Aorta (tissue), 5 donors: ENCODE measurements at regions of chr13 and their contacts with region 1.

Region 1: GRCh38 chr13:20997430-20998161 is 63.8 kb downstream of the LATS2 start:
- DNase-seq: peak in 1 of 2 donors; percentile 71
- ATAC-seq: peak; percentile 30
- H3K4me3 ChIP-seq: no peak overlapping the region
- H3K27ac ChIP-seq: peak overlapping the region in 1 of 2 donors; percentile 71
- H3K4me1 ChIP-seq: no peaks in the 10 kb centered on the region
- H3K27me3 ChIP-seq: no peaks in the 10 kb centered on the region

Region 2: GRCh38 chr13:20803180-20803965 is 194.2 kb before region 1 on chr13:
- intact Hi-C with region 1: no loop called
- DNase-seq: no peak
- ATAC-seq: no peak
- H3K4me3 ChIP-seq: no peak overlapping the region
- H3K27ac ChIP-seq: no peak overlapping the region
- H3K4me1 ChIP-seq: peaks cover 0 to 2% of the 10 kb centered on the region in 2 donors
- H3K27me3 ChIP-seq: no peaks in the 10 kb centered on the region

Region 3: GRCh38 chr13:21060987-21061763 is 63.6 kb after region 1 on chr13 and contains the start of gene LATS2:
- intact Hi-C with region 1: loop called in 1 of 2 experiments (anchors 5 kb)
- DNase-seq: peak; percentile 97 to 99
- ATAC-seq: peak; percentile 97
- H3K4me3 ChIP-seq: peak within 1 kb of the TSS; percentile 95 to 98
- H3K27ac ChIP-seq: peak within 1 kb of the TSS; percentile 97 to 99
- H3K4me1 ChIP-seq: no peaks in the 10 kb centered on the region
- H3K27me3 ChIP-seq: no peaks in the 10 kb centered on the region
- total RNA-seq, gene LATS2: 52.9 to 64.6 TPM

Region 4: DNA sequence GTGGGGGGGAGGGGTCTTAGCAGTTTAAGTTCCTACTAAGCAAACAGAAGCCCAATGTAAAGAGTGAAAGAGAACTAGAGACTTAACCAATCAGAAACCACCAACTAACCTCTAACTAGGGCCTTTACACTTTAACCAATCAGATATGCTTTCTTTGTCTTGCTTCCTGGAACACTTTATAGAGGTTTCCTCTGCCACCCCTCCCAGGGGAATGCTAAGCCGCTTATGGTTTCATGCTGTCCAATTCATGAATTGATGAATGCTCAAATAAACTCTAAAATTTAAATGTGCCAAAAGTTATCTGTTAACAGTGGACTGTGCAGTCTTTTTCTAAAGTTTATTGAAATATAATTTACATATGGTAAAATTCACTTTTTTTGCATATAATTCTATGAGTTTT is 97.7 kb after region 1 on chr13:
- intact Hi-C with region 1: no loop called
- DNase-seq: no peak
- ATAC-seq: no peak
- H3K4me3 ChIP-seq: no peak overlapping the region
- H3K27ac ChIP-seq: no peak overlapping the region
- H3K4me1 ChIP-seq: no peaks in the 10 kb centered on the region
- H3K27me3 ChIP-seq: no peaks in the 10 kb centered on the region

Region 5: DNA sequence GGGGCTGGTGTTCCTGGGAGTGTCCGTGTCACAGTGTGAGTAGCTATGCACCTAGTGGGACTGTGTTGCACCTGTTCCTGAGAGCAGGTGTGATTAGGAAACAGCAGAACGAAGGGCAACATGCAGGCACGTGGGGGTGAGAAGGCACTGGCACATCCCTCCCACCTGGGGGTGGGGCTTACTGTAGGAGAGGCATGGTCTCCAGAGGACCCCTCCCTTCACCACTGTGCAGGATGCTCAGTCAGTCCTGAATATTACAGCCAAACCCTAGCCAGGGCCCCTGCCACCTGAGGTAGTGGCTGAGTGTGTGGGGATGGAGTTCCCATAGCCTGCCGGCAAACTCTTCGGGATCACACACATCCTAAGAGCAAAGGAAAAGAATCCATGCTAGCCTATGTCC is 362.3 kb after region 1 on chr13:
- intact Hi-C with region 1: no loop called
- DNase-seq: no peak
- ATAC-seq: no peak
- H3K4me3 ChIP-seq: no peak overlapping the region
- H3K27ac ChIP-seq: no peak overlapping the region
- H3K4me1 ChIP-seq: no peaks in the 10 kb centered on the region
- H3K27me3 ChIP-seq: no peaks in the 10 kb centered on the region

Region 6: DNA sequence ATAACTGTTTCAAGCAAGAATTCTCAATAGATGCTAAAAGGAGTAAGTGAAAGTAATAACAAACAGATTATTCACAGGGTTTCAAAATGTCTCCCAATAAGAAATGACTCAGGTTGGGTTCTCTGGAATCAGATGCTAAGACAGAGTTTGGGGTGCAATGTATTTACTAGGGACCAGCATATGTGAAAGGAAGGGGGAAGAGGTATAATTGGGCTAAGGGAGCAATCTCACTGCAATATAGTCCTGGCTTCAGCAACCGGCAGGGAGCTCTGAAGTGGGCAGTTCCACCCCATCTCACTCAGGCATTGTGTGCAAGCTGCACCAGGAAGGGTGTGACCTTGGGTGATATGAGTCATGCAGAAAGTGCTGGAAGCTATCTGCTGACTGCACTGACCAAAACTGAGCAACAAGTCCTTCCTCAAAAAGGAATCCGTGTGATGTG is 438.1 kb after region 1 on chr13:
- intact Hi-C with region 1: no loop called
- DNase-seq: peak in 1 of 2 donors; percentile 75
- ATAC-seq: peak; percentile 77
- H3K4me3 ChIP-seq: no peak overlapping the region
- H3K27ac ChIP-seq: no peak overlapping the region
- H3K4me1 ChIP-seq: no peaks in the 10 kb centered on the region
- H3K27me3 ChIP-seq: no peaks in the 10 kb centered on the region